BJ (cell line): ENCODE measurements at regions of chr9 and their contacts with region 1.

Region 1: DNA sequence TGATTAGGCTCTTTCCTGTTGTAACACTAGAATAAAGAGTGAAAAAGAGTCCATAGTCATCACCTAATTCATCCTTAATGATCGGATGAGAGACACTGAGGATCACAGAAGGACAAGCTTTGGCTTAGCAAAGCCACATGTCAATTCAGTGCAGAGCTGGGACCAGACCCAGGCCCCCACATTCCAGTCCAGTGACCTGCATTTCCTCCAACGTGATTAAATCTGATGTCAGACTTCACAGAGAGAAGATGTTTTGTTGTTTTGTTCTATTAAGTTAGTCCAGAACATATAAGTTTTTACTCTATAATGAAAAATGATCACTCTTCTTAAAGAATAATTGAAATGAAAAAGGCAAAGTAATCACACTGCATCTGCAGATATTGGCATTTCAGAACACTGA is 377.9 kb upstream of the PAPPA start:
- DNase-seq: no peak
- H3K4me3 ChIP-seq: no peak overlapping the region
- H3K27me3 ChIP-seq: no peaks in the 10 kb centered on the region
- CTCF ChIP-seq: no peak

Region 2: DNA sequence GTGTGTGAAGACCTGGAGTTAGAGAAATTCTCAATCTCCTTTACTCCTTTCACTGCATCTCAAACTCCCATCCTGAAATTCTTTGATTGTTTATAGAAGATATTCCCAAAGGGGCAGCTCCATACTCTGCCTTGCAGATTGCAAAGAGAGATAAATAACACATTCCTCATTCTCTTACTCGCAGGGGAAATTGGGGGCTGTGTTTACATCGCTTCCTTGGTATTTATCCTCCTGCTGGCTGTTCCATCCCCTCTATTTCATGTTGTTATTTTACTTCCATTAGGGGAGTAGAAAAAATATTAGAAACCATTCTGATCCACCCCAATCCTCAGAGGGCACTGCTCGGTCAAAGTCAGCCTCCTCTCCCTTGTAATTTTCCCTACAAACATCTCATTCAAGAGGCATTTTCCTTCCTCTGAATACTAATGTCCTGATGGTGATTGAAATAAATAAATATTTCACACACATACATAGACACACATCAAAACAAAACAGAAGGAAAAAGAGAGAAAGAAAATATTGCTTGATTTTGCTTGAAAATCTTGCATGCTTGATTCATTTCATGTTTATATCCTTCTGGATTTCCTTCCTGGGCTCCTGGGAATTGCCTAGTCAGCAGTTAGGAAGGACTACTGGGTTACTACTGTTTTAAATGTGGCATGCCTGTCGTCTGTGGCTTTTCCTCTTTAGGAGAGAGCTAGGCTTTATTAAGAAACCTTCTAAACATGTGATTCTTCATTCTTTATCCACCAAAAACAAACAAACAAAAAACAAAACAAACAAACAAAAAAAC is 42.1 kb before region 1 on chr9:
- CTCF ChIA-PET with region 1: no interaction called
- POLR2A ChIA-PET with region 1: no interaction called
- DNase-seq: no peak
- H3K4me3 ChIP-seq: no peak overlapping the region
- H3K27me3 ChIP-seq: no peaks in the 10 kb centered on the region
- CTCF ChIP-seq: no peak

Region 3: DNA sequence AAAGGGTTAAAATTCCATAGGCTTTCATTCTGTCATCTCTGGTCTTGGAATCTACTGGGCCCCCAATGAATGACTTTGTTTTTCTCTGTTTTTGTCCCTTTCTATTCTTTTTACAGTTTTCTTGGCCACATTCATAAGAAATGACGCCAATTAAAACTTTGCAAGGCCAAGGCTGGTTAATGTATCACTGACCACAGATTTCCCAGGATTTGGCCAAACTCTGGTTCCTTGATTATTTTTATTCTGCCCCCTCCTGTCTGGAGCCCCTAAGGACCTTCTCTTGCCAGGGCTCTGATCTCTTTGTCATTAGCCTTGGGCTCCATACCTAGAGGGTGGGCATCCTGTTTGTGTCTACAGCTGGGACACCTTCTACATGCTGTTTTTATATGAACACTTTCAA is 11.0 kb before region 1 on chr9:
- CTCF ChIA-PET with region 1: interaction called, 10 read pairs
- POLR2A ChIA-PET with region 1: no interaction called
- DNase-seq: no peak
- H3K4me3 ChIP-seq: no peak overlapping the region
- H3K27me3 ChIP-seq: no peaks in the 10 kb centered on the region
- CTCF ChIP-seq: no peak